ENCODE measurements at regions of chr4 and their contacts with region 1.

Region 1: DNA sequence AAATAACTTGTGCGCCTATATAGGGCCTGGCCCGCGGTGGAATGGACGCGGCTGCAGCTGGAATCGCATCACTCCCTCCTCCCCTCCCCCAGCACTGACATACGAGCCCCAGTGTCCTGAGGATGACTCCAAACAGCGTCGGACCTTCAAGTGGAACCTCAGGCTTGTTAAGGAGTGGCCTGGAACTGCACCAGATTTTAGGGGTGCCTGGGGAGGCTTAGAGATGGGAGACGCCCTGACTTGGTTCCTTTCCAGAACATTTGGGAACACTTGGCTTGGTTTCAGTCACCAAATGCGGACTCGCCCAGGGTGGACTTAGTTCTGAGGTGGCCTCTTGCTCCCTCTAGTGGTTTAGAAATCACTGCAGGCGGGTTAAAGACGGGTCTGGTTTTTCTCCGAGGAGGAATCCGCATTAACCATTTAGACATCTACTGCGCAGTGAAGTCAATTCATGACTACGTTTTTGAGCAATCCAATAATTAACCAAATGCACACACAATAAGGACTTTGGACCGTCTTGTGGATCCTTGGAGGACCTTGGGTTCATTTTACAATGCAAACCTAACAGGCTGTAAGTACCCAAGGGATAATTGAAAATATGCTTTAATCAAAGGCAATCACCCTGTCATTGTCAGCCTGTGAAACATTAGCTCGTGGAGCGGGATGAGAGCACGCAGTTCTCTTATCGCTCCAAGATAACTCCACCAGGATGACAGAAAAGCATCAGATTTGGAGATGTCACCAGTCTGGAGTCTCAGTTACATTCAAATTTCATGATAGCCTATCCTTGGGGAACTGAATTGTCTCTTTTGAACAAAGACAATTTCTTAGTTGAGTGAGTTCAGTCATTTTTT is 11.2 kb upstream of the PDGFRA start:
- DNase-seq: peak; percentile 62 to 85
- ATAC-seq: peak; percentile 88 to 94
- H3K4me3 ChIP-seq: peak overlapping the region; percentile 39 to 51 (median 45)
- H3K27ac ChIP-seq: peak overlapping the region in 1 of 4 donors; percentile 29
- H3K4me1 ChIP-seq: peaks cover 3% of the 10 kb centered on the region in 2 donors
- H3K27me3 ChIP-seq: peaks cover 0 to 4% (median 0%) of the 10 kb centered on the region in 3 donors
- CTCF ChIP-seq: peak; percentile 83 to 95 (median 89)
- POLR2A ChIP-seq: no peak

Region 2: GRCh38 chr4:53196882-53197771 is 1020.7 kb before region 1 on chr4:
- in situ Hi-C with region 1: loop called (anchors 10 to 25 kb)
- intact Hi-C with region 1: no loop called
- DNase-seq: no peak
- ATAC-seq: peak in 1 of 2 donors; percentile 55
- H3K4me3 ChIP-seq: no peak overlapping the region
- H3K27ac ChIP-seq: no peak overlapping the region
- H3K4me1 ChIP-seq: no peaks in the 10 kb centered on the region
- H3K27me3 ChIP-seq: no peaks in the 10 kb centered on the region
- CTCF ChIP-seq: peak; percentile 44 to 71 (median 60)
- POLR2A ChIP-seq: no peak

Region 3: GRCh38 chr4:53899586-53900270 is 318.1 kb before region 1 on chr4:
- in situ Hi-C with region 1: loop called in 1 of 4 experiments (anchors 25 kb)
- intact Hi-C with region 1: no loop called
- DNase-seq: no peak
- ATAC-seq: peak in 1 of 2 donors; percentile 26
- H3K4me3 ChIP-seq: no peak overlapping the region
- H3K27ac ChIP-seq: no peak overlapping the region
- H3K4me1 ChIP-seq: peaks cover 0 to 4% of the 10 kb centered on the region in 2 donors
- H3K27me3 ChIP-seq: peaks cover 0 to 14% (median 3%) of the 10 kb centered on the region in 3 donors
- CTCF ChIP-seq: no peak
- POLR2A ChIP-seq: no peak

Region 4: GRCh38 chr4:53929955-53930798 is 287.7 kb before region 1 on chr4:
- in situ Hi-C with region 1: loop called (anchors 5 to 10 kb)
- intact Hi-C with region 1: loop called (anchors 1 kb)
- DNase-seq: peak; percentile 38 to 63
- ATAC-seq: peak; percentile 86 to 87
- H3K4me3 ChIP-seq: no peak overlapping the region
- H3K27ac ChIP-seq: no peak overlapping the region
- H3K4me1 ChIP-seq: no peaks in the 10 kb centered on the region
- H3K27me3 ChIP-seq: no peaks in the 10 kb centered on the region
- CTCF ChIP-seq: peak; percentile 65 to 79 (median 72)
- POLR2A ChIP-seq: no peak

Region 5: GRCh38 chr4:54091637-54092404 is 126.0 kb before region 1 on chr4:
- in situ Hi-C with region 1: no loop called
- intact Hi-C with region 1: loop called (anchors 10 kb)
- DNase-seq: peak; percentile 51 to 75
- ATAC-seq: peak; percentile 89 to 94
- H3K4me3 ChIP-seq: peak overlapping the region; percentile 50 to 69 (median 62)
- H3K27ac ChIP-seq: peak overlapping the region; percentile 63 to 78 (median 67)
- H3K4me1 ChIP-seq: peaks cover 0 to 9% of the 10 kb centered on the region in 2 donors
- H3K27me3 ChIP-seq: peaks cover 19 to 38% (median 27%) of the 10 kb centered on the region in 3 donors
- CTCF ChIP-seq: no peak
- POLR2A ChIP-seq: no peak